Ascending aorta (tissue), 2 donors: ENCODE measurements at regions of chr22 and their contacts with region 1.

Region 1: GRCh38 chr22:41940832-41941765 is 5.9 kb downstream of the CENPM start:
- DNase-seq: peak; percentile 50 to 92
- H3K4me3 ChIP-seq: no peak overlapping the region
- H3K27ac ChIP-seq: peak overlapping the region; percentile 52 to 66
- H3K4me1 ChIP-seq: peaks cover 0 to 7% of the 10 kb centered on the region in 2 donors
- H3K27me3 ChIP-seq: no peaks in the 10 kb centered on the region
- CTCF ChIP-seq: peak; percentile 92 to 96 (median 93)

Region 2: DNA sequence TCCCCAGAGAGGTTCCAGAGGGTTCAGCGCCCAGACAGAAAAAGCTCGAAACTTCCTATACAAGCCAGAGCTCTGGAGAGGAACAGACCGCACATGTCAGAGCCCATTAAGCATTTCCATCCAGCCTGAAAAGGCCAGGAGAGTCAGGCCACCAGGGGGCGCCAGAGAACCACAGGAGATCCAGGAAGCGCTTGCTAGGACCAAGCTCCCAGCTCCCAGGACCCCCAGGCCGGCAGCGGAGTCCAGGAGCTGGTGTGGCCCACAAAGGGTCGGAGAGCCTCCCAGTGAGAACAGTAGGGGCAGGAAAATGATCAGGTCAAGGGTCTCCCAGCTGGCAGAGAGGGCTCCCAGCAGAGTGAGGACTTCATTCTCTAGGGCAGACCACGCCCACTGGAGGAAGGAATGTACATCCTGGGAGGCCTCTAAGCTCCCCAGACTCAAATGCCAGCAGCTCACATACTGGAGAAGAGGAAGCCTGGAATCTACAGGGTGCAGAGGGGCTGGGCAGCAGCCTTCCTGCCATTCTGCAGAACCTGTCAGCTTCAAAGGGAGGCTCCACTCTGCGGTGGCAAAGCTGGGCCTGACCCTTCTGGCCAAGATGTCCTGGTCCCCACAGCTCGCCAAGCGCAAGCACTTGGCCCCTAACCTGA is 243.8 kb before region 1 on chr22:
- intact Hi-C with region 1: loop called (anchors 1 kb)
- DNase-seq: peak; percentile 49 to 95
- H3K4me3 ChIP-seq: peak overlapping the region in 1 of 2 donors; percentile 36
- H3K27ac ChIP-seq: peak overlapping the region in 1 of 2 donors; percentile 65
- H3K4me1 ChIP-seq: peaks cover 0 to 8% of the 10 kb centered on the region in 2 donors
- H3K27me3 ChIP-seq: no peaks in the 10 kb centered on the region
- CTCF ChIP-seq: peak; percentile 89 to 98 (median 95)

Region 3: DNA sequence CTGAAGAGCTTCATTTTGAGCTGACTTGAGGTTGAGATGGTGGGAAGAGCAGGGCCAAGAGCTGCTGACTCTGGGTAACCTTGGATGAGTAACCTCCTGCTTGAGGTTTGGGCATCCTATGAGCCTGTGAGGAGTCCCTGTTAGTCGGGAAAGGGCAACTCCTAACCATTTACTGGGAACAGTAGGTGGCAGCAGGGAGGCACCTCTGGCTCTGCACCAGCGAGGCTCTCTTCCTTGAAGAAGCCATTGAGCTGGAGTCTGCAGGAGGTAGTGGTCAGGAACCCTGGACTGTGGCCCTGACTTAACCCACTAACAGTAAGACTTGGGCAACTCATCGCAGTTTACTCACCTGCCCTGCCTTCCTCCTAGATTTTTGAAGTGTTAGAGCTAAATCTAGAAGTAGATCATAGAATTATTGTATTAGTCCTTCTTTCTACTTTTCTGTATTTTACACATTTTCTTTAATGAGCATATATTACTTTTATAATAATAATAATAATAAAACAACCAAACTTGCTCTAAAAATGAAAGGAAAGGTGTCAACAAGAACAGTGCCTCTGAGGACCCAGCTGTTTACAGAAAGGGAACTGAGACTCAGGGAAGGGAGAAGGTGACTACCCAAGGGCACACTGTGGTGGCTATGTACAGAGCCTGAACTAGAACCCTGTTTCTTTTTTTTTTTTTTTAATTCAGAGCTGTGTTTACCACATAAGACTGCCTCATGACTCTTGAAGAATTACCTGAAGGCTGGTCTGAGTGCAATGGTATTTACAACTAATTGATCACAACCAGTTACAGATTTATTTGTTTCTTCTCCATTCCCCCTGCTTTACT is 194.3 kb before region 1 on chr22:
- intact Hi-C with region 1: loop called (anchors 1 kb)
- DNase-seq: peak in 1 of 2 donors; percentile 80
- H3K4me3 ChIP-seq: no peak overlapping the region
- H3K27ac ChIP-seq: no peak overlapping the region
- H3K4me1 ChIP-seq: no peaks in the 10 kb centered on the region
- H3K27me3 ChIP-seq: no peaks in the 10 kb centered on the region
- CTCF ChIP-seq: peak; percentile 53 to 71 (median 56)

Region 4: DNA sequence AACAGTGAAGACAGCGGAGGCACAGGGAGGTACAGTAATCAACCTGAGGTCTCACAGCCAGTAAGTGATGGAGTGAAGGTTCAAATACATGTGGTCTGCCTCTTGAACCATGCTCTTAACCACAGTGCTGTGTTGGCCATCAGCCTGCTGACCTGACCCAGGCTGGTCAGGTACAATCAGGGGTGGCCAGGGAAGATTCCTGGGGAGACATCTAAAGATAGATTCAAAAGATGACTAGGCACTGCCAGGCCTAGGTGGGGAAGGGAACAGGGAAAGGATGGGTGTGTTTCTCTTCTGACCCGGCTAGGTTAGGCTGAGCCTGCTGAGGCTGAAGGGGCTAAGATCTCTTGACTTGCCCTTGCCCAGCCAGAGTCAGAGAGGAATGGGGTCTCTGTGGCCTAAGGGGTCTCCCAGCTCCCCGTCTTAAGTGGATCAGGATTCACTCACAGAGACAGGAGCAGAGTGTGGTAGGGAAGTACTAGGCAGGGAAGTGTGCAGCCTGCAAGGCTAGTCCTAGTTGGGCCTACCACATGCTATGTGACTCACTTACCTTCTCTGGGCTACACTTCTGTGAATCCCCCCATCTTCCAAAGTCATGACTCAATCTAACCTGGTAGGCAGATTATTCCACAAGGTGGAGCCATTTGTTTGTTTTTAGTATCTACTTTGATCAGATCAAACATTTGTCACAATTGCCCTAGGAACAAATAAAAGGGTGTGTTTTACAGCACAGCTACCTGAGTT is 118.6 kb before region 1 on chr22:
- intact Hi-C with region 1: loop called (anchors 2 kb)
- DNase-seq: no peak
- H3K4me3 ChIP-seq: no peak overlapping the region
- H3K27ac ChIP-seq: no peak overlapping the region
- H3K4me1 ChIP-seq: no peaks in the 10 kb centered on the region
- H3K27me3 ChIP-seq: no peaks in the 10 kb centered on the region
- CTCF ChIP-seq: peak in 2 of 3 experiments; percentile 40 to 45

Region 5: DNA sequence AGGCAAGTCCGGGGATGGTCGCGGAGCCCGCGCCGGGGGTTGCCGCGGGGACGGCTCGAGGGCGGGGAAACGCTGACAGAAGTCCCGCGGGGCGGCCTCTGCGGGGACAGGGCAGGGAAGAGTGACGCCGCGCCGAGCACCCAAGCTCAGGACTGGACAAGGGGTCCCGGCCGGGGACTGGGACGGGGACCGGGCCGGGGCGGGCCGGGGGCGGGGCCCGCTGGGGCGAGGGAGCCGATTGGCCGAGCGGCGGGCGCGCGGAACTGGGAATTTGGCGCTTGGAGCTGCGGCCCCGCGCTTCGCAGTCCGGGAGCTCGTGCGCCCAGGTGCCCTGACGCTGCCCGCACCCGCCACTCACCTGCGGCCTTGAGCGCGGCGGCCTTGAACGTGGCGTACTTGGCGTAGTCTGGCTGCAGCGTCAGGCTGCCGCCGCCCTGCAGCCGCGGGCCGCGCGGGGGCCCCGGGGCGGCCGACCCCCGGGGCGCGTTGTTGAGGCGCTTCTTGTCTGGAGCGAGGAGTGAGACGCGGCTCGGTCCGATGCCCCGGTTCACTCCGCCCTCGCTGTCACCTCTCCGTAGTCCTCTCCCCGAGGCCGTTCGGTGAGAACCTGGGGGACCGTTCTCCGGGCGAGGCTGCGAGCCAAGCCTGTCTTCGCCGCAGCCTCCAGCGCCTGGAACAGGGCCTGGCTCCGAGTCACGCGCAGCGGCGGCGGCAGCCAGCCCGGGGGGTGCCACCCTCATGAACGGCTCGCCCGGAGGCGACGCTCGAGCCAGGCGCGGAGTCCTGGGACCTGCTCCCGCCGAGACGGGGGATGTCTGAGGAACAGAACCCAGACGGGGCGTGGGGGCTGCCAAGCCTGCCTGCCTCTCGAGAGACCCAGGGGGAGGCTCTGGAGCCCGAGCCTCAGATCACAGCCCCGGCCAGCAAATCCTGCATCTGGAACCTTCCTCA is 30.8 kb before region 1 on chr22:
- intact Hi-C with region 1: no loop called
- DNase-seq: no peak
- H3K4me3 ChIP-seq: peak overlapping the region; percentile 52 to 55
- H3K27ac ChIP-seq: no peak overlapping the region
- H3K4me1 ChIP-seq: peaks cover 13 to 16% of the 10 kb centered on the region in 2 donors
- H3K27me3 ChIP-seq: peaks cover 33% of the 10 kb centered on the region
- CTCF ChIP-seq: no peak

Region 6: GRCh38 chr22:42016101-42016500 is 75.0 kb after region 1 on chr22:
- intact Hi-C with region 1: no loop called
- DNase-seq: no peak
- H3K4me3 ChIP-seq: no peak overlapping the region
- H3K27ac ChIP-seq: no peak overlapping the region
- H3K4me1 ChIP-seq: no peaks in the 10 kb centered on the region
- H3K27me3 ChIP-seq: no peaks in the 10 kb centered on the region
- CTCF ChIP-seq: no peak